Panc1 (cell line): ENCODE measurements at regions of chr5 and their contacts with region 1.

Region 1: DNA sequence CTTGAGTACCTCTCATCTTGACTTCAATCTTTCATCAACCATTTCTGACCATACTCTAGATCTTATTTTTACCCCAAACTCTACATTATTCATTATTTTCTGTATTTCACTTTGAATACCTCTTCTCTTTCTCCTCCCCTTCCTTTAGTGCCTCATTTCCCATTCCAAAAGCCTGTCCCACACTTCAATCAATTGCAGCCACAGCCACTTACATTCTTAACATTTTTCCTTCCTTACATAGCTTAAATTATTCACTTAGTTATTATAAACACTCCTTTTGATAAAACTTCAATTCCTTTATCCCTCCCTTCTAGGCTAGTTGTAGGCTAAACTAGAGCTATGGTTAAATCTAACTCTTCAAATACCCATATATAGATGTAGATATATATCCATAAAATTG is 344.0 kb downstream of the PRR16 start:
- DNase-seq: no peak
- ATAC-seq: no peak
- H3K4me3 ChIP-seq: no peak overlapping the region
- H3K27ac ChIP-seq: no peak overlapping the region
- H3K4me1 ChIP-seq: no peaks in the 10 kb centered on the region
- H3K27me3 ChIP-seq: no peaks in the 10 kb centered on the region
- CTCF ChIP-seq: no peak

Region 2: GRCh38 chr5:120677481-120677880 is 130.7 kb before region 1 on chr5:
- CTCF ChIA-PET with region 1: no interaction called
- POLR2A ChIA-PET with region 1: interaction called, 13 read pairs
- in situ Hi-C with region 1: no loop called
- intact Hi-C with region 1: no loop called
- DNase-seq: no peak
- ATAC-seq: no peak
- H3K4me3 ChIP-seq: no peak overlapping the region
- H3K27ac ChIP-seq: no peak overlapping the region
- H3K4me1 ChIP-seq: no peaks in the 10 kb centered on the region
- H3K27me3 ChIP-seq: no peaks in the 10 kb centered on the region
- CTCF ChIP-seq: no peak